ENCODE measurements at regions of chr22 and their contacts with region 1.

Region 1: GRCh38 chr22:33920927-33921524 is 750 bp upstream of the LARGE1 start:
- DNase-seq: peak; percentile 78 to 97
- H3K4me3 ChIP-seq: peak overlapping the region; percentile 68
- H3K27ac ChIP-seq: no peak overlapping the region
- H3K4me1 ChIP-seq: 0 out of 2 replicates have a peak, but pooled peaks cover 5% of the 10 kb centered on the region
- H3K27me3 ChIP-seq: peaks cover 64% of the 10 kb centered on the region
- CTCF ChIP-seq: no peak

Region 2: DNA sequence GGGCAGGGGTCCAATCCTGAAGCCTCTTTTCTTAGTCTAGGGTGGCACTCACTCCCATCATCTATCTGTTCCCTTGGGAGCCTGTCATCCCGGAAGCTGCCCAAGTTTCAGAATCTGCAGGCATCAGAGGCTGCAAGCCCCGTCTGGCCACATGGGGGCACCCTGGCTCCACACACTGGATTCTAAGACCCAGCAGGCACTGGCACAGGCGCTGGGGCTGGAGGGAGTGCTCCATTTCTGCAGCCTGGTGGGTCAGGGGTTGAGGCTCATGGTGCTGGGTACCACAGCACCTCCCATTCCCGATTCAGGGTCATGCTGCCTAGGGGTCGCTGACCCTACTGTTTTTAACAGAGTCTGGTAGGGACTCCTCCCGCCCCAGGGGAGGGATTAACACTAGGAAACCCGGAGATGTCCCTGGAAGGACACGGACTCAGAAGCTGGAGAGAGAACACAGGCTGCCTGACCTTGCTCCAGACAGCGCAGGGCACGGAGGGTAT is 618.9 kb before region 1 on chr22:
- CTCF ChIA-PET with region 1: no interaction called
- POLR2A ChIA-PET with region 1: no interaction called
- intact Hi-C with region 1: loop called (anchors 5 kb)
- DNase-seq: peak; percentile 43 to 71
- H3K4me3 ChIP-seq: no peak overlapping the region
- H3K27ac ChIP-seq: no peak overlapping the region
- H3K4me1 ChIP-seq: no peaks in the 10 kb centered on the region
- H3K27me3 ChIP-seq: peaks cover 13% of the 10 kb centered on the region; the same call in 1 of the 2 replicates
- CTCF ChIP-seq: peak; percentile 97

Region 3: DNA sequence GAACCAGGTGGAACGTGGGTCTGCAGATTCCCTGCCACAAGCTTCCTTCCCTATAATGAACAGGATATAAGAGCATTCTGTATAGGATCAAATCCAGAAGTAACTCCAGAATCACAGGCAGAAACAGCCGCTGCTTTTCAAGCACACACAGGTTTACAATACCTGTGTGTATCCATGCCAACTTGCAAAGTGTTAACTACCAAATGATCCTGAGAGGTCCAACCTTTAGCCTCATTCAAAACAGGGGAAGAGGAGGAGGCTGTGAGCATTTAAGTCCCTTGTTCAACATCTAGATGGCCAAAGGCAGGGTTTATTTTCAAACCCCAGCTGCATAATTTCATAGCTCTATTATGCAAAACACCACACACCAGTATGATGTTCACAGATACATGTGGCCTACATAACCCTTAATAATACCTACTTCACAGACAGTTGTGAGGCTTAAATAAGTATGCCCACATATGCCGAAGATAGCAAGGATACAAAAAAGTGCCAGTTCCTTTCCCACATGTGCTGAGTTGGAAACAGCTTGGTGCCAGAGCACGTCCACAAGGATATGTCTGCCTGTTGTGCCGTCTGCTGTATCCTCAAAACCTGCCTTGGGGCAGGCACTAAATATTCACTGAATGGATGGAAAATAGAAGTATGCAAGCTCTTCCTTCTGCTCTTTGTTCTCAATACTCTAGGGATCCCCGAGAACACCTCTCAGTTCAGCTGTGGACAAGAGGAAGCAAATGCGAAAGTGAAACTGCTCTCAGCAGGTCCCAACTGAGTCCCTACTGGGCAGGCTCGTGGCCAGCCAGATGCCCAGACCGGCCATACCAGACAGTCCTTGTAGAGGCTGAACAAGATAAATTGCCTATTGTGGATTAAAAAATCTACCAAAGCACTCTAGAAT is 67.6 kb before region 1 on chr22:
- CTCF ChIA-PET with region 1: interaction called, 4 read pairs
- POLR2A ChIA-PET with region 1: no interaction called
- intact Hi-C with region 1: loop called (anchors 5 kb)
- DNase-seq: peak; percentile 68
- H3K4me3 ChIP-seq: peak overlapping the region; percentile 64
- H3K27ac ChIP-seq: peak overlapping the region; percentile 55
- H3K4me1 ChIP-seq: peaks cover 32% of the 10 kb centered on the region
- H3K27me3 ChIP-seq: no peaks in the 10 kb centered on the region
- CTCF ChIP-seq: no peak

Region 4: GRCh38 chr22:34105461-34106062 is 184.5 kb after region 1 on chr22:
- CTCF ChIA-PET with region 1: no interaction called
- POLR2A ChIA-PET with region 1: no interaction called
- intact Hi-C with region 1: loop called (anchors 5 kb)
- DNase-seq: peak in 1 of 2 experiments; percentile 12
- H3K4me3 ChIP-seq: no peak overlapping the region
- H3K27ac ChIP-seq: no peak overlapping the region
- H3K4me1 ChIP-seq: no peaks in the 10 kb centered on the region
- H3K27me3 ChIP-seq: peaks cover 35% of the 10 kb centered on the region
- CTCF ChIP-seq: peak; percentile 59

Region 5: DNA sequence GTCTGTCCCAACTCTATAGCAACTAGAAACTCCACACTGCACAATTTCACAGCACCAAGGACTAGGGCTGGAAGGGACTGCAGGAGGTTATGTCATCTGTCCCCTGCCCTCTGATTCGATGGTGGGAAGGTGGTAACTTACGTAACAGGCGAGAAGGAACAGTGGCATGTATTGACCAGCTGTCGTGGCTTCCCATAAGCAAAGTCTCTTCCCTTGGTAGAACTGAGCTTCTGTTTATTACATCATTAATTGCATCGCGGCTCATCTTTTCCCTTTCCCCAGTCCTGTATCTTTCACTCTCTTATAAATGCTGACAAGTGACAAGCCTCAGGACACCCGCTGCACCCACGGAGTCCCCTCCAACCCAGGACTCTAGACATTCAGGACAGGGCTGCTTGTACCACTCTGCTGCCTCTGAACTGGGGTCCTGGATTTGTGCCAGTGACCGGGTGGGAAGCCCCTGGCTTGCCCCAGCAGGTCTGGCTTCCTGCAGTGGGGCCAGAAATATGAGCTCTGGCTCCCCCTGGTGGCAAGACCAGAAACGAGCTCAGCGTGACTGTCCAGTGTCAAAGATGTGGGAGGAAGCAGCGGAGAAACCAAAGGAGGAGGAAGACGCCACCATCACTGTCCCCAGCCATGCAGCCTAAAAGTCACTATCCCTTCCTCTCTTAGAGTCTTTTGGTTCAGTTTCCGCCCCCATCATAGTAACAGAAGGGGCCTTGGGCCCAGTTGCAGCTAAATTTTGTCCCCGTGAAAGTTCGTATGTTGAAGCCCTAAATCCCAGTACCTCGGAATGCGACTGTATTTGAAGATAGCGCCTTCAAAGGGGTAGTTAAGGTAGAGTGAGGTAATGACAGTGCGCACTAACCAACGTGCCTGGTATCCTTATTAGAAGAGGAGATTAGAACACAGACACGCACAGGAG is 1229.4 kb after region 1 on chr22:
- CTCF ChIA-PET with region 1: no interaction called
- POLR2A ChIA-PET with region 1: no interaction called
- intact Hi-C with region 1: loop called (anchors 5 kb)
- DNase-seq: peak in 1 of 2 experiments; percentile 53
- H3K4me3 ChIP-seq: no peak overlapping the region
- H3K27ac ChIP-seq: no peak overlapping the region
- H3K4me1 ChIP-seq: no peaks in the 10 kb centered on the region
- H3K27me3 ChIP-seq: peaks cover 43% of the 10 kb centered on the region
- CTCF ChIP-seq: peak; percentile 91